Sigmoid colon (tissue), 7 donors: ENCODE measurements at regions of chr9 and their contacts with region 1.

Region 1: DNA sequence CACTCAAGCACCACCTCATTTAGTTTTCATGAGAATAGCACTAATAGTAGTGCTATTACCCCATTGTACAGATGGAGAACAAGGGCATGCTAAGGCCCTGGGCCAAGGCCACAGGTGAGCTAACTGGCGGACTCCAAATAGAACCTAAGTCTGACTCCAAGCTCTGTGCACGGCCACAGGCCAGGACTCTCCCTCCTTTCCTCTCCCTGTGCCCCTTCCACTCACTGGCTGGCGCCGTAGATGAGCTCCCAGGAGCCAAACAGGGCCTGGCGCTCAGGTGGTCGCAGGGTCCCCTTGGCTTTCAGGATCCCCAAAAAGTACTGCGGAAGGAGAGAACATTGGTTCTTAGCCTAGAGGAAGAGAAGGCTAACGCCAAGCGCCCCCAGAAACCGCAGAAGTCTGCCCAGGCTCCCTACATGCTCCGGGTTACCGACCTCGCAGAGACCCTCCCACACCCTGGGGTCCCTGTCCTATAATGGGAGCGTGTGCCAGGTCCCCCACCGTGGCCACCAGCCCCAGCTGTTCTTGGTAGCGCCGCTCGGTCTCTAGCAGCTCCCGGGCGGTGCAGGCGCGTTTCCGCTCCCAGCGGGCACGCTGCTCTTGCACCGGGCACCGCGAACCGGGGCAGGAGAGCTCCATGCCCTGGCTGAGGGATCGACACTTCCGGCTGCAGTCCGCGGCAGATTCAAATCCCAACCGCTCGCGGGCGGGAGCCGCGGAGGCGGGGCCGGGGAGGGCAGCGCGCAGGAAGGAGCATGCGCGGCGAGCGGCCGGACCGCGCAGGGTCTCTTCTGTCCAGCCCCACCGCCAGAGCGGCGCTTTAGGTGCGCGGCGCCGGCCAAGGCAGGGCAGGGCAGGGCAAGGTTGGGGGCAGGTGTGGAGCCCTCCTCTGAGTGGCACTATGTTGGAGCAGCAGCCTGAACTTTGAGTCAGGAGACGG is at the start of gene ARHGEF39:
- DNase-seq: peak; percentile 90
- H3K4me3 ChIP-seq: peak within 1 kb of the TSS; percentile 27 to 58 (median 48)
- H3K27ac ChIP-seq: peak within 1 kb of the TSS; percentile 97 to 98 (median 98)
- H3K4me1 ChIP-seq: peaks cover 0 to 52% (median 48%) of the 10 kb centered on the region in 4 donors
- H3K27me3 ChIP-seq: no peaks in the 10 kb centered on the region
- CTCF ChIP-seq: no peak
- EP300 ChIP-seq: no peak
- POLR2A ChIP-seq: peak in 1 of 2 donors; percentile 48
- total RNA-seq, gene ARHGEF39: 0.99 to 3.3 (median 1.4) TPM

Region 2: DNA sequence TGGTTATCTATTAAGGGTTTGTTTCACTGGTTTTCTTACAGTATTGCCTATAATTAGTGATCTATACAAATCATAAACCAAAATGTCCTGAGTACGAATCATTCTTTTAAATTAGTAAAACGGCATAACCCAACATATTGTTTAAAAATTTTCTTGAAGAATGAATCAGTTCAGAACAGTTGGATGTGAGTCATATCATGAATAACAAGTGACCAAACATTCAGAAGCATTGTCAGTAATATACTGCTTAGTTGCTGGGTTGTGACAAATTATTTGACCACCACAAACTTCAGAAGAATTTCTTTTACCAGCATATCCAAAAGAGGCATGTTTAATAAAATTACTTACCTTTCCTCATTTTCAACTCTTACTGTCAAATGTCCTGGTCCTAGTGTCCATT is 391.8 kb before region 1 on chr9:
- intact Hi-C with region 1: no loop called
- DNase-seq: no peak
- H3K4me3 ChIP-seq: no peak overlapping the region
- H3K27ac ChIP-seq: no peak overlapping the region
- H3K4me1 ChIP-seq: peaks cover 0 to 10% (median 0%) of the 10 kb centered on the region in 4 donors
- H3K27me3 ChIP-seq: no peaks in the 10 kb centered on the region
- CTCF ChIP-seq: no peak
- EP300 ChIP-seq: no peak
- POLR2A ChIP-seq: no peak

Region 3: DNA sequence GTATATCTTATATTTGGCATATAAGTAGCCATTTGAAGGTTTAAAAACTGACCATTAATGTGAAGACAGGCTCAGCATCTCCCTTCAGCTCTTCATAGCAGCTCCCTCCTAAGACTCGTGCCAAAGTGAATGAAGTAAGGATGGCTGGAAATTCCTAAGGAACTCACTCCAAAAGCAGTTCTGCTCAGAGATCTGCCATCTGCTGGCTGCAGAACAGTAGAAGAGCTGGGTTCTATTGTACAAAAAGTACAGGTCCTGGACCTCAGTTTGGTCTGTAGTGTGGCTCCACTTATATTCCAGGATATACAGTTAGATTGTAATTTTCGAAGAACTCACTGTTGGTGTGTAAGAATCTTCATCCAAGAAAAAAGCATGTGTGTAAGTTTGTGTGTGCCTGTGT is 279.8 kb before region 1 on chr9:
- intact Hi-C with region 1: no loop called
- DNase-seq: no peak
- H3K4me3 ChIP-seq: no peak overlapping the region
- H3K27ac ChIP-seq: no peak overlapping the region
- H3K4me1 ChIP-seq: no peaks in the 10 kb centered on the region
- H3K27me3 ChIP-seq: no peaks in the 10 kb centered on the region
- CTCF ChIP-seq: no peak
- EP300 ChIP-seq: no peak
- POLR2A ChIP-seq: no peak

Region 4: GRCh38 chr9:35579130-35579529 is 85.7 kb before region 1 on chr9:
- intact Hi-C with region 1: no loop called
- DNase-seq: no peak
- H3K4me3 ChIP-seq: no peak overlapping the region
- H3K27ac ChIP-seq: no peak overlapping the region
- H3K4me1 ChIP-seq: no peaks in the 10 kb centered on the region
- H3K27me3 ChIP-seq: no peaks in the 10 kb centered on the region
- CTCF ChIP-seq: no peak
- EP300 ChIP-seq: no peak
- POLR2A ChIP-seq: no peak

Region 5: DNA sequence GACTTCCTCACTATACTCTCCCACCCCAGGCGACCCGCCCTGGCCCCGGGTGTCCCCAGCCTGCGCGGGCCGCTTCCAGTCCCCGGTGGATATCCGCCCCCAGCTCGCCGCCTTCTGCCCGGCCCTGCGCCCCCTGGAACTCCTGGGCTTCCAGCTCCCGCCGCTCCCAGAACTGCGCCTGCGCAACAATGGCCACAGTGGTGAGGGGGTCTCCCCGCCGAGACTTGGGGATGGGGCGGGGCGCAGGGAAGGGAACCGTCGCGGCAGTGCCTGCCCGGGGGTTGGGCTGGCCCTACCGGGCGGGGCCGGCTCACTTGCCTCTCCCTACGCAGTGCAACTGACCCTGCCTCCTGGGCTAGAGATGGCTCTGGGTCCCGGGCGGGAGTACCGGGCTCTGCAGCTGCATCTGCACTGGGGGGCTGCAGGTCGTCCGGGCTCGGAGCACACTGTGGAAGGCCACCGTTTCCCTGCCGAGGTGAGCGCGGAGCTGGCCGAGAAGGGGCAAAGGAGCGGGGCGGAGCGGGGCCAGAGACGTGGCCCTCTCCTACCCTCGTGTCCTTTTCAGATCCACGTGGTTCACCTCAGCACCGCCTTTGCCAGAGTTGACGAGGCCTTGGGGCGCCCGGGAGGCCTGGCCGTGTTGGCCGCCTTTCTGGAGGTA is 11.1 kb after region 1 on chr9:
- intact Hi-C with region 1: loop called (anchors 1 kb)
- DNase-seq: no peak
- H3K4me3 ChIP-seq: peak overlapping the region; percentile 37 to 56 (median 48)
- H3K27ac ChIP-seq: peak overlapping the region in 3 of 4 donors; percentile 13 to 52 (median 28)
- H3K4me1 ChIP-seq: peaks cover 0 to 28% (median 26%) of the 10 kb centered on the region in 4 donors
- H3K27me3 ChIP-seq: no peaks in the 10 kb centered on the region
- CTCF ChIP-seq: no peak
- EP300 ChIP-seq: no peak
- POLR2A ChIP-seq: no peak

Region 6: DNA sequence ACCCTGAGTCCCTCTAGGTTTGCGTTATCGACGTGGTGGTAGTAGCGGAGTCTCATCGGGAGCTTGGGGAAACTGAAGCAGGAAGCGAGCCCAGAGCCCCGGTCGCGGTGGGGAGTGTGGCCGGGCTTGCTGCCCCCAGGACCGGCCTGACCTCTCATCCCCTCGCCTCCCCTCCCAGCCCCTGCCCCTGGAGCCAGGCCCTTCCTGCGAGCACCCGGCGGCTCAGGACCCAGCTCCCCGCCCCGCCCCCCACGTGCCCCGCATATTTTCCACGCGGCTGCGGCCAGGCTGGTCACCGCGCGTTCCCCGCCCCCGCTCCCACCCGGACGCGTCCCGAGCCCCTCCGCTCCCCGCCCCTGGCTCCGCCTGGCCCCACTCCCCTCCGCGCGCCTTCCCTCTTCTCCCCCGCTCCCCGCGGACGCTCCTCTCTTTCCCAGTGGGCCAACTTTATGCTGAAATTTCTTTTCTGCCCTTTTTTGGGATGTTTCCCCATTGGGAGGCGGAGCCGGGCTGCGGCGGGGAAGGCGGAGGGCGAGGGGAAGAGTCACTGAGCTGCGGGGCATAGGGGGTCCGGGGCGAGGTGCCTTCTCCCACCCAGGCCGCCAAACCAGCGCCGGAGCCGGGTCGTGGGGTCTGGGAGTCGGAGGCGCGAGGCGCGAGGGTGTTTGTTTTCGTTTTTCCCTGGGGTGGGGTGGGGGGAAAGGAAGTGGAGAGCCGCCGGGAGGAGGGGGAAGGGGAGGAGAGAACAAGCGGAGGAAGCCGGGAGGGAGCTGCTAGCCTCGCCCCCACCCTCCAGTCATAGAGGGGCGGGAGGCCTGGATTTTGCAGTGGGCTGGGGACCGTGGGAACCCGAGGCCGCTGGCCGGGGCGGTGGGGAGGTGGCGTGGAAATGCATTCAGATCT is 25.9 kb after region 1 on chr9:
- intact Hi-C with region 1: loop called (anchors 1 kb)
- DNase-seq: peak; percentile 97
- H3K4me3 ChIP-seq: peak overlapping the region; percentile 88 to 97 (median 94)
- H3K27ac ChIP-seq: peak overlapping the region; percentile 95 to 100 (median 98)
- H3K4me1 ChIP-seq: peaks cover 0 to 46% (median 22%) of the 10 kb centered on the region in 4 donors
- H3K27me3 ChIP-seq: no peaks in the 10 kb centered on the region
- CTCF ChIP-seq: no peak
- EP300 ChIP-seq: peak in 1 of 4 donors; percentile 38
- POLR2A ChIP-seq: peak; percentile 53 to 65